ENCODE measurements at regions of chr12 and their contacts with region 1.

Region 1: GRCh38 chr12:50314629-50315312 is 31.5 kb upstream of the LIMA1 start:
- DNase-seq: no peak
- ATAC-seq: no peak

Region 2: GRCh38 chr12:50187084-50187900 is 127.5 kb before region 1 on chr12:
- intact Hi-C with region 1: loop called (anchors 10 kb)
- DNase-seq: no peak
- ATAC-seq: peak; percentile 20

Region 3: DNA sequence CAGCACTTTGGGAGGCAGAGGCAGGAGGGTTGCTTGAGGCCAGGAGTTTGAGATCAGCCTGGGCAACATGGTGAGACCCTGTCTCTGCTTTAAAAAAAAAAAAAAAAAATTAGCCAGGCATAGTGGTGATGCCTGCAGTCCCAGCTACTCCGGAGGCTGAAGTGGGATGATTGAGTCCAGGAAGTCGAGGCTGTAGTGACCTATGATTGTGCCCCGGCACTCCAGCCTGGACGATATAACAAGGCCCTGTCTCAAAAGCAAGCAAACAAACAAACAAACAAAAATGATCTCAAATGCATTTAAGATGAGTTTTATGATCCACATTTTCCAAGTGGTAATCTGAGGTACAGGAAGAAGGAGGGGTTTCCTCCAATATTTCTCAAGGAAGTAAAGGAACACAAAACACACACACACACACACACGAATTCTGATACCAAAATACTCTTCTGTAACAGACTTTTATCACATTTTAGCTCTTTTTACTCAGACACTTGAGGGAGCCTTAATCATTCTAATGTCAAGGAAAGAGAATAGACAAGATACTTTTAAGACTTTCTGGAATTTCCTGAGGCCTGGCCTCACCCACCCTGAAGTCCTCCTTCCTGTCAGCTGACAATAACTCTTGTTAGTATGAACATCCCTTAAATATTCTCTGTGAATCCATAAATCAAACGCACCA is 103.2 kb before region 1 on chr12:
- intact Hi-C with region 1: loop called (anchors 10 kb)
- DNase-seq: no peak
- ATAC-seq: peak; percentile 20

Region 4: GRCh38 chr12:50365709-50366406 is 51.1 kb after region 1 on chr12:
- intact Hi-C with region 1: no loop called
- DNase-seq: no peak
- ATAC-seq: no peak

Measured in Right ventricle myocardium inferior (tissue), 1 donor.